ENCODE measurements at regions of chr10 and their contacts with region 1.

Region 1: GRCh38 chr10:124106241-124106879 is 13.0 kb upstream of the CHST15 start:
- DNase-seq: peak; percentile 86
- H3K4me3 ChIP-seq: peak overlapping the region; percentile 65
- H3K27ac ChIP-seq: peak overlapping the region; percentile 94
- H3K4me1 ChIP-seq: peaks cover 100% of the 10 kb centered on the region
- CTCF ChIP-seq: no peak

Region 2: GRCh38 chr10:124063750-124064603 is 42.4 kb before region 1 on chr10:
- CTCF ChIA-PET with region 1: interaction called, 3 read pairs
- POLR2A ChIA-PET with region 1: interaction called, 12 read pairs
- intact Hi-C with region 1: no loop called
- DNase-seq: peak; percentile 74
- H3K4me3 ChIP-seq: peak overlapping the region; percentile 57
- H3K27ac ChIP-seq: peak overlapping the region; percentile 85
- H3K4me1 ChIP-seq: peaks cover 72% of the 10 kb centered on the region
- CTCF ChIP-seq: no peak

Region 3: GRCh38 chr10:124083740-124084397 is 22.5 kb before region 1 on chr10:
- CTCF ChIA-PET with region 1: interaction called, 9 read pairs
- POLR2A ChIA-PET with region 1: interaction called, 19 read pairs
- intact Hi-C with region 1: no loop called
- DNase-seq: no peak
- H3K4me3 ChIP-seq: no peak overlapping the region
- H3K27ac ChIP-seq: no peak overlapping the region
- H3K4me1 ChIP-seq: peaks cover 70% of the 10 kb centered on the region
- CTCF ChIP-seq: no peak

Region 4: DNA sequence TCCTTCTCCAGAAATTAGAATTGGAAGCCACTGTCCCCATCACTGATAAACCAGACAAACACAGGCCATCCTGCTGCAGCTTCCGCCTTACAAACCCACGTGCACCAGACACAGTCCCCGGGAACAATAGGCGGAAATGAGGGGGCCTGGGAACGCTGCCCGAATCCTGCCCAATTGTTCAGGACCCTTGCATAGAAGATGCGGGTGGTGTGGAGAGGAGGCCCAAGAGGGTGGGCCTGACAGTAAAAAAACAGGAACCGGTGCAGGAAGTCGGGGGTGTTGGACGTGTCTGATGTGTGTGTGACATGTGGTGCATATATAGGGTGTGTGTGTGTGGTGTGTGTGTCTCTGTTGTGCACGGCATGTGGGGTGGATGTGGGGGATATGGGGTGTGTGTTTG is 13.6 kb after region 1 on chr10:
- CTCF ChIA-PET with region 1: interaction called, 10 read pairs
- POLR2A ChIA-PET with region 1: interaction called, 51 read pairs
- intact Hi-C with region 1: no loop called
- DNase-seq: peak; percentile 67
- H3K4me3 ChIP-seq: peak overlapping the region; percentile 12
- H3K27ac ChIP-seq: peak overlapping the region; percentile 55
- H3K4me1 ChIP-seq: peaks cover 65% of the 10 kb centered on the region
- CTCF ChIP-seq: no peak

Region 5: DNA sequence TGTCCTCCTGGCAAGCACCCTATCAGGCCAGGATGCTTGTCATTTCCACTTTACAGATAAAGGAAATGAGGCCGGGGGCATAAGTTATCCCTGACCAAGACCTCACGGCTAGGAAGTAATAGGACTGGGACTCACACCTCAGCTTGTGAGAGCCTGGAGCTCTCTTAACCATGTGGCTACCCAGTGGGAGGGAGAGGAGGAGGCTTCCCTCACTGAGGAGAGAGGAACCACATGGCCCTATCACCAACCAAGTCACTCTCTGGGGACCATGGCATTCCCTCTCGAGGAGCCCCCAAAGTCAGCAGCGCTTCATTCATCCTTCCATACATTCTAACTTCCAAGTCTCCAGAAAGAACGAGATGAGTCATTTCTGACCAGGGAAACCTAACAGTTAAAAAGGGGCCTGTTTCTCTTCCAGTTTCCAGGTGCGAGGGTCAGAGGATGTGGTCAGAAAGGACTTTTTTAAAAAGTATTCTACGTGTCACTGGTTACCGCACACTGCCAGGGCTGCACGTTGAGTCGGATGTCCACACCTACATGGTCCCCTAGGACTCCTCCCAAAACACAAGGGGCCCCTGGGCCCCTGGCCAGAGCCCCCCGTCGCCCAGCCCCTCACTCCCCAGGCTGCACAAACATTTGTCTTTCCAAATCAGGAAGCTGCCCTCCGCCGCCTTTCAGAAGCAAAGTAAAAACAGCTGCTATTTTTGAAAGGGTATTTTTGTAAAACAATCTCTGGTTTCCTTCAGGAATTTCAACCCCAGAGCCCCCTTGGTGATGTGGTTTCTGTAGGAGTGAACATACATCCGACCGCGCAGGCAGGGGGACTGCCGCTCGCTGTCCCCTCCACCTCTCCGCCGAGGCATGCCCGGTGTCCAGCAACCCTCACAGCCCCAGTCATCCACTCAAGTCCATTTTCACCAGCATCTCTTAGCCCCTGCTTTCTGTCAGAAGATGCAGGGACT is 115.3 kb after region 1 on chr10:
- CTCF ChIA-PET with region 1: no interaction called
- POLR2A ChIA-PET with region 1: interaction called, 4 read pairs
- intact Hi-C with region 1: loop called (anchors 10 kb)
- DNase-seq: peak; percentile 74
- H3K4me3 ChIP-seq: peak overlapping the region; percentile 33
- H3K27ac ChIP-seq: no peak overlapping the region
- H3K4me1 ChIP-seq: peaks cover 25% of the 10 kb centered on the region
- CTCF ChIP-seq: no peak

Region 6: GRCh38 chr10:124315591-124316270 is 209.4 kb after region 1 on chr10:
- CTCF ChIA-PET with region 1: no interaction called
- POLR2A ChIA-PET with region 1: no interaction called
- intact Hi-C with region 1: no loop called
- DNase-seq: no peak
- H3K4me3 ChIP-seq: no peak overlapping the region
- H3K27ac ChIP-seq: no peak overlapping the region
- H3K4me1 ChIP-seq: no peaks in the 10 kb centered on the region
- CTCF ChIP-seq: no peak

Region 7: DNA sequence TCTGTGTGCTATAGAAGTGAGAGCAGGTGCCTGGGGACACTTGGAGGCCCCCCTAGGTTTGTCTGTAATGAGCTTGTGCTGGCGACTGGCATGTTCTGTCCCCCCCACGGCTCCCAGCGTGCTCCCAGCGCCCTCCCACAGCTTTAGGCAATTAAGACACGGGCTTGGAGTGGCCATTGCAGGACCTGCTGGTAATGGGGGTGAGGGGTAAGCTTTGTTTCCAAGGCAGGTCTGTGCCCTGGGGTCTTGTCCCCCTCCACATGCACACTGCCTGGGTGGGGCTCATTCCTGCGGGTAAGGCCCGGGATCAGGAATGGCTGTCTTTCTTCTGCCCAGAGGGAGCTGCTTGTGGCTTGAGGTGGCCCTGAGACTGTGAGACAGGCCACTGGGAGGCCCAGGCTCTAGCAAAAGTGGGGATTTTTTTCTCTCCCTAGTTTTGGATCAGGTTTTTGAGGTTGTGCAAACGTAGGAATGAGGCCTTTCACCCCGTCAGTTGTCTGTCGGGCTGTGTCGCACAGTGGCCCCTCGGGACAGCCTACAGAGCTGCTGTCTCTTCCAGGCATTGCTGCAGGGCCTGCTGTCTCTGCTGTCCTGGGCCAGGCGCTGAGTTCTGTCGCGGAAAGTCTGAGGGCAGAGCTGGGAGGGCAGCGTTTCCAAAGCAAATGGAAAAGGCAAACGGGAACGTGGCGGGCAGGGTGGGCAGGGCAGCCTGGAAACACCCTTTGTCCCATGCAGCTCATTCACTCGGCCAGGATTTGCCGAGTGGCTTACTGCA is 462.7 kb after region 1 on chr10:
- CTCF ChIA-PET with region 1: no interaction called
- POLR2A ChIA-PET with region 1: no interaction called
- intact Hi-C with region 1: no loop called
- DNase-seq: no peak
- H3K4me3 ChIP-seq: no peak overlapping the region
- H3K27ac ChIP-seq: no peak overlapping the region
- H3K4me1 ChIP-seq: peaks cover 33% of the 10 kb centered on the region
- CTCF ChIP-seq: no peak